Mammary epithelial cell (primary cell): ENCODE measurements at regions of chr19 and their contacts with region 1.

Region 1: DNA sequence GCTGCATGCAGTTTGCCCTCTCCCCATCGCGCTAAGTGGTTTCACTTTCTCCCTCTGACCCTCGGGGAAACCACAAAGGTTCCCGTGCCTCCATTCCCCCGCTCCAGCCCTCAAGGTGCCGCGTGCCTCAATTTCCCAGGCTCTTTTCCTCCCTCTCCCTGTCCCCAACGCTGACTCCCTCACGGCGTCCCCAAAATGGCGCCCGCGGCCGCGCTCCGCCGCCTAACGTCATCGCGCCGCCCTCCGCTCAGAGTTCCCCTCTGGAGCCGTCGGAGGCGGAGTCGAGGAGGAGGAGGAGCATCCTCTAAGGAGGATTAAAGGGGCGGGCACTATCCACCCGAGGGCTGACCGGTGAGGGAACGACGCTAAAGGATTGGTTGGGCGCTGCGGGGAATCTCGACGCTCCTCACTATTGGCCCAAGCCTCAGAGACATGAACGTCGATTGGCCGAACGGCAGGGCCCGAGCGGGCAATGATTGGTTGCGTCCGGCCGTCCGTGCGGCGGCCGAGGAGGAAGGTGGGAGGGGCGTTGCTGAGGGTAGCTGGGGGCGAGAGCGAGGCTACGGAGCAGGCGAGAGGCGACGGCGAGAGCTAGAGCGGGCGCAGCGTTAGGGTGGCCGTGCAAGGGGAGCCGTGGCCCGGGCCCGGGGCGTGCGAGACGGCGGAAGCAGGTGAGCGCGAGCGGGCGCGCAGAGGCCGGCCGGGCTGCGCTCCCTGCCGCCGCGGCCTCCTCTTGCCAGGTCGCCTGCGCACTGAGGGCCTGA is at the start of gene ZNF574:
- DNase-seq: peak; percentile 100
- H3K4me3 ChIP-seq: peak within 1 kb of the TSS; percentile 83 to 89 (median 86)
- H3K27ac ChIP-seq: peak within 1 kb of the TSS; percentile 94
- H3K4me1 ChIP-seq: peaks cover 29% of the 10 kb centered on the region
- H3K27me3 ChIP-seq: no peaks in the 10 kb centered on the region
- CTCF ChIP-seq: no peak
- total RNA-seq, gene ZNF574: 16.8 to 19.7 TPM

Region 2: DNA sequence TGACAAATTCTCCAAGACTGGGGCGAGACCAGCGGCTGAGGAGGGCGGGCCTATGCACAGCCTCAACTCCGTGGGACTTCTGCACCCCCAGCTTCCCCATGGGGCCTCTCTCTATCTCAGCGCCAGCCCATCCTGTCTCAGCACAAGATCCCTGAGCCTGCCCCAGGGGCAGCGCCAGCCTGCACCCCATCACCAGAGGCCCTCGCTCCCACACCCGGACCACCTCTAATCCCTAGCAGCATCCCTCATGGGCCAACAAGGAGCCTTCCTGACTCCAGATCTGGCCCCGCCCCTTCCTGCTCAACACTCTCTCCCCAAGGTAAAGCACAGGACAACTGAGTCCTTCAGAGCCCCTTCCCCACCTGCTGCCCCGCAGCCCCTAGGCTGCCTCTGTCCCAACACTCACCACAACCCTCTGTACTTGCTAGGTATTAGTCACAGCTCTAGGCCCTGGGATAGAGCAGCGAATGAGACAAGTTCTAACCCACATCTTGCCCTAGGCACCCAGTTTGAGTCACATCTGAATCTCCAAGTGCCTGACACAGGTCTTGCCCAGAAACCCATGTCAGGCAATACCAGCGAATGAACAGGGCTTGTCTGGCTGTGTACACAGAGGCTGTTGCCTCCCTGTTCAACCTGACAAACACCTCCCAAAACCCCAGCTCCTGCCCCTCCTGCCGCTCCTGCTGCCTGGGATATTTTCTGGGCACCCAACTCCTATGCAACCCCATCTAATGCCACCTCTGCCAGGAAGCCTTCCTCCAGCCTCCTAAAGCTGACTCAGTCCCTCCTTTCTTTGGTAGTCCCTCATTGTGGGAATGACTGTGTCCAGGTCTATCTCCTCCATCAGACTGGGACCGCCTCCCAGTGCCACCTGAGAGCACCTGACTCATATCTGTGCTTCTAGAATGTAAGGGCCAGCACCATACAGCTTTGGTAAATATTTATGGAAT is 24.4 kb before region 1 on chr19:
- CTCF ChIA-PET with region 1: no interaction called
- dilution Hi-C with region 1: no loop called
- in situ Hi-C with region 1: no loop called
- intact Hi-C with region 1: loop called (anchors 1 kb)
- DNase-seq: peak; percentile 99
- H3K4me3 ChIP-seq: no peak overlapping the region
- H3K27ac ChIP-seq: peak overlapping the region; percentile 69
- H3K4me1 ChIP-seq: peaks cover 38% of the 10 kb centered on the region
- H3K27me3 ChIP-seq: no peaks in the 10 kb centered on the region
- CTCF ChIP-seq: no peak

Region 3: GRCh38 chr19:42433503-42434260 is 357.9 kb after region 1 on chr19:
- CTCF ChIA-PET with region 1: no interaction called
- dilution Hi-C with region 1: no loop called
- in situ Hi-C with region 1: no loop called
- intact Hi-C with region 1: no loop called
- DNase-seq: peak; percentile 39
- H3K4me3 ChIP-seq: no peak overlapping the region
- H3K27ac ChIP-seq: no peak overlapping the region
- H3K4me1 ChIP-seq: no peaks in the 10 kb centered on the region
- H3K27me3 ChIP-seq: no peaks in the 10 kb centered on the region
- CTCF ChIP-seq: peak; percentile 78 to 91